HepG2 (cell line): ENCODE measurements at regions of chr1 and their contacts with region 1.

Region 1: GRCh38 chr1:87542697-87543096 is 214.0 kb downstream of the LMO4 start:
- DNase-seq: no peak
- ATAC-seq: no peak
- H3K4me3 ChIP-seq: no peak overlapping the region
- H3K27ac ChIP-seq: no peak overlapping the region
- H3K4me1 ChIP-seq: no peaks in the 10 kb centered on the region
- H3K27me3 ChIP-seq: no peaks in the 10 kb centered on the region
- CTCF ChIP-seq: no peak
- EP300 ChIP-seq: no peak
- POLR2A ChIP-seq: no peak
- RAD21 ChIP-seq: no peak

Region 2: DNA sequence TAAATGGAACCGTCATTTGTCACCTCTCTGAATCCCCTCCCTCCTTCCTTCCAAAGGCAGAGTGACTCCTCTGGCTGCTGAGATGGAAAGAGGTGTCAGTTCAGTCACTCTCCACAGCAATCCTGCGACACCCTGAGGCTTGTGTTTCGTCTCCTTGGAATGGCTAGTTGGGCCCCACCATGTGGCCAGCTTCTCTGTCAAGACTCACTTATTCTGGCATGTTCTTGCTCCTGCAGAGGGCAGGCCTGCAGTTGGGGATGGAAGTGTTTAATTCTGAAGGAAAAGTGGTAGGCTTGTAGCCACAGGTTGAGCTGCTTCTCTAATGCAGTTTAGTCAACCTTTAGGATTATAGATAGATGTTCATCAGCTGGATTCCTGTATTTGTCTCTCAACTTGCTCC is 64.5 kb before region 1 on chr1:
- CTCF ChIA-PET with region 1: no interaction called
- POLR2A ChIA-PET with region 1: no interaction called
- in situ Hi-C with region 1: no loop called
- intact Hi-C with region 1: no loop called
- DNase-seq: no peak
- ATAC-seq: peak; percentile 37; the same call in 1 of the 3 replicates
- H3K4me3 ChIP-seq: no peak overlapping the region
- H3K27ac ChIP-seq: no peak overlapping the region
- H3K4me1 ChIP-seq: no peaks in the 10 kb centered on the region
- H3K27me3 ChIP-seq: no peaks in the 10 kb centered on the region
- CTCF ChIP-seq: peak; percentile 31
- EP300 ChIP-seq: no peak
- POLR2A ChIP-seq: no peak
- RAD21 ChIP-seq: no peak

Region 3: DNA sequence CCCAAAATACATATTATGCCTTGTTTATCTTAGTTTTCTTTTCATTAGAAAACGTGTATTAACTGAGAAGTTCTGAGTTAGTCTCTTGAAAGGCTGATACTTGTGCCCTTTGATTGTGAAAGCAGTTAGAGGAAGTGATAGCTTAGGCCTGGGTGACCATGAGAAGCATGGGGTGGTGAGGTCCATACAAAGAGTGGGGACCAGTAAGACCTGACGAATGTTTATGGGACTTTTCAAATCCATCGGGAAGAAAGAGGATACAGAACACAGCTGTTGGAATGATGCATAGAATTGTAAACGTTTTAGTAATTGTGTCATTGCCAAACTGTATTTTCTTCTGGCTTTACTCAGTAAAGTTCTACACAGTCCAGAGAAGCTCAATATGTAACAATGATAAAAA is 45.8 kb after region 1 on chr1:
- CTCF ChIA-PET with region 1: no interaction called
- POLR2A ChIA-PET with region 1: no interaction called
- in situ Hi-C with region 1: no loop called
- intact Hi-C with region 1: loop called (anchors 1 kb)
- DNase-seq: no peak
- ATAC-seq: no peak
- H3K4me3 ChIP-seq: no peak overlapping the region
- H3K27ac ChIP-seq: no peak overlapping the region
- H3K4me1 ChIP-seq: no peaks in the 10 kb centered on the region
- H3K27me3 ChIP-seq: no peaks in the 10 kb centered on the region
- CTCF ChIP-seq: no peak
- EP300 ChIP-seq: no peak
- POLR2A ChIP-seq: no peak
- RAD21 ChIP-seq: no peak